Heart right ventricle (tissue), 16 donors: ENCODE measurements at regions of chrX and their contacts with region 1.

Region 1: GRCh38 chrX:50779694-50780093 is 34.3 kb downstream of the SHROOM4 start:
- DNase-seq: peak in 1 of 2 donors; percentile 31
- ATAC-seq: peak; percentile 41 to 82 (median 66)
- H3K4me3 ChIP-seq: no peak overlapping the region
- H3K27ac ChIP-seq: peak overlapping the region in 1 of 10 donors; percentile 51
- H3K4me1 ChIP-seq: peaks cover 0 to 17% (median 7%) of the 10 kb centered on the region in 9 donors
- H3K27me3 ChIP-seq: peaks cover 0 to 37% (median 0%) of the 10 kb centered on the region in 7 donors
- CTCF ChIP-seq: no peak

Region 2: DNA sequence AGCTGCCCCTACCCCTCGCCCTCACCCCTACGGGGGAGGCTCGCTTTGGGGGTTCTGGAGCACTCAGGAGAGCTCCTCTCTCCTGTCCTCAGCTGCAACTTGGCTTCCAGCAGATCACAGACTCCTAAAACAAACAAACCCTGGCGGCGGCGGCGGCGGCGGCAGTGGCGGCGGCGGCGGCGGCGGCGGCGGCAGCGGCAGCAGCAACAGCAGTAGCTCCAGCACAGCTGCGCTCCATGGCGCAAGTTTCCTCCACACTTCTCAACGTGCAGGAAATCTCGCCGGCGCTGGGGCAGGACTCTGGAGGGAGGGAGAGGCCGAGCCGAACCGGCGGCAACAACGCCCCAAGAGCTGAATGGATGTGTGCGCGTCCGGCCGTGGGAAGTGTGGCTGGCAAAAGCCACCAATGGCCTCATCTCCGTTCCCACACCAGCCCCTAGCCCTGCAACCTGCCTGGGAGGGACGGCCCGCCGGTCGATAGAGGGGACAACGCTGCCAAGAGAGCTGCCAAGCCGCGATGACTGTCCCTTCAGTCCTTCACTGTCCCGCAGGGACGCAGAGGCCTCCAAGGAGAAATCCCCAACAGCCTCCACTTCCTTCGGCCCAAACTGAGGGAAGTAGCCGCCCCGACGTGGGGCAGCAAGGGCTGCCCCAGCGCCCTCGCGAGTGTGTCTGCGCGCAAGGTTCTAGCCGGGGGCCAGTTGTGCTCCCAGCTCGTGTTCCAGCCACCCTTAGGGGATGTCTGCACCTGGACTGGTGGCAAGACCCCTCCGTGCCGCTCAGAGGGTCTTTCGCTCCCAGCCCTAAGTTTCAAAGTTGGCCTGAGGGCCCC is 33.5 kb after region 1 on chrX:
- intact Hi-C with region 1: no loop called
- DNase-seq: peak; percentile 45 to 46
- ATAC-seq: peak; percentile 56 to 85 (median 74)
- H3K4me3 ChIP-seq: peak overlapping the region; percentile 37 to 72 (median 62)
- H3K27ac ChIP-seq: peak overlapping the region; percentile 54 to 86 (median 82)
- H3K4me1 ChIP-seq: no peaks in the 10 kb centered on the region
- H3K27me3 ChIP-seq: peaks cover 0 to 61% (median 0%) of the 10 kb centered on the region in 7 donors
- CTCF ChIP-seq: no peak

Region 3: DNA sequence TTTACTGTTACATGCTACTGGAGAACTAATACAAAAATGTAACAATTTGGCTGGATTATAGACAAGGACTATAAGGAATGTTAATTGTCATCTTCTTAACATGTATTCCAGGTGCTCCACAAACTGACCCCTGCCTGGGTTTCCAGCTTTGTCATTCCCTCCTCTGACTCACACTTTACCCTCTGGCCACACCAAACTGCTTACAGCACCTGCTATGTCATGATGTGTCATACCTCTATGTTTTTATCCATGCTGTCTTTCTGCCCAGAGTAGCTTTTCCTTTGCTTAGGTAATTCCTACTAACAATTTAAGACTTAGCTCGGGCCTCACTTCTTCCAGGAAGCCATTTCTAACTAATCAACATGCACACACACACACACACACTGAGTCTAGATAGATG is 48.3 kb after region 1 on chrX:
- intact Hi-C with region 1: loop called in 1 of 10 experiments (anchors 5 kb)
- DNase-seq: no peak
- ATAC-seq: no peak
- H3K4me3 ChIP-seq: no peak overlapping the region
- H3K27ac ChIP-seq: no peak overlapping the region
- H3K4me1 ChIP-seq: no peaks in the 10 kb centered on the region
- H3K27me3 ChIP-seq: peaks cover 0 to 28% (median 0%) of the 10 kb centered on the region in 7 donors
- CTCF ChIP-seq: no peak